Activated CD8-positive, alpha-beta T cell treated with anti-CD3 and anti-CD28 coated beads, Interleukin-2, amount 10 ng/mL, durations not matched to agents 7 days and 5 days (primary cell): ENCODE measurements at regions of chr2 and their contacts with region 1.

Region 1: GRCh38 chr2:101223814-101224231 is 28.9 kb upstream of the CNOT11 start:
- DNase-seq: peak; percentile 83
- ATAC-seq: peak; percentile 95
- H3K4me3 Mint-ChIP-seq: peak overlapping the region; percentile 34
- H3K27ac Mint-ChIP-seq: peak overlapping the region; percentile 86
- H3K4me1 Mint-ChIP-seq: peaks cover 28% of the 10 kb centered on the region
- H3K27me3 Mint-ChIP-seq: no peaks in the 10 kb centered on the region

Region 2: DNA sequence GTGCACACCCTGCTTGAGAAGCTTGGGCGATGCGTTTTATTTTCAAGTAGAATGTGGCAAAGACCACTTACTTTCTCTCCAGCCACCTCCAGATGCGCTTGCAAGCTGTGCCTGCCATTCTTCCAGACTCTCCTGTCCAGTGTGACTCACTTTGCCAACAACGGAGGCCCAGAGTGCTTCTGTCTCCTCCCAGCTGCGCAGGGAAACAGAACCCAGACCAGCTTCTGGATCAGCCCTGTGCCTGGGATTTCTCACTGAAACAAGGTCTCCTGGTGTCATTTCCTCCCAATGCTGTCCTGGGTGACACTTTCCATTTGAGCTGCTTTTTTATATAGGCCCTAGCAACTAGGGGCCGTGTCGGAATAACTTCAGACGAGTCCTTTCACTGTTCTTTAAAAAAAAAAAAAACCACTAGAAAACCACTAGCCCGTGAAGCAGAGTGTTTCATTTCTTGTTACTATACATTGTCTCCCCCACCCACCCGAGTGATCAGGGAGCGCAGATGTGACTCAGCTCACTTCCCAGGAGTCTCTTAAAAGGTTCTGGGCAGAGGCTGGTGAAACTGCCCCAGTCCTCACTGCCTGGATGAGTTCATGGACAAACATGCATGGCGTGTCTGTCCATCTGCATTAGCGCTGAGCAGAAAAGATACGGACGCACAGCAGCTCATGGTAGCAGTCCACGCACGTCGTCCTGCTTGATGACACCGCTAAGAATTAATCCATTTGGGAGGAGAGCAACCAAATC is 247.0 kb before region 1 on chr2:
- CTCF ChIA-PET with region 1: no interaction called
- POLR2A ChIA-PET with region 1: no interaction called
- DNase-seq: no peak
- ATAC-seq: no peak
- H3K4me3 Mint-ChIP-seq: no peak overlapping the region
- H3K27ac Mint-ChIP-seq: no peak overlapping the region
- H3K4me1 Mint-ChIP-seq: peaks cover 7% of the 10 kb centered on the region
- H3K27me3 Mint-ChIP-seq: no peaks in the 10 kb centered on the region

Region 3: DNA sequence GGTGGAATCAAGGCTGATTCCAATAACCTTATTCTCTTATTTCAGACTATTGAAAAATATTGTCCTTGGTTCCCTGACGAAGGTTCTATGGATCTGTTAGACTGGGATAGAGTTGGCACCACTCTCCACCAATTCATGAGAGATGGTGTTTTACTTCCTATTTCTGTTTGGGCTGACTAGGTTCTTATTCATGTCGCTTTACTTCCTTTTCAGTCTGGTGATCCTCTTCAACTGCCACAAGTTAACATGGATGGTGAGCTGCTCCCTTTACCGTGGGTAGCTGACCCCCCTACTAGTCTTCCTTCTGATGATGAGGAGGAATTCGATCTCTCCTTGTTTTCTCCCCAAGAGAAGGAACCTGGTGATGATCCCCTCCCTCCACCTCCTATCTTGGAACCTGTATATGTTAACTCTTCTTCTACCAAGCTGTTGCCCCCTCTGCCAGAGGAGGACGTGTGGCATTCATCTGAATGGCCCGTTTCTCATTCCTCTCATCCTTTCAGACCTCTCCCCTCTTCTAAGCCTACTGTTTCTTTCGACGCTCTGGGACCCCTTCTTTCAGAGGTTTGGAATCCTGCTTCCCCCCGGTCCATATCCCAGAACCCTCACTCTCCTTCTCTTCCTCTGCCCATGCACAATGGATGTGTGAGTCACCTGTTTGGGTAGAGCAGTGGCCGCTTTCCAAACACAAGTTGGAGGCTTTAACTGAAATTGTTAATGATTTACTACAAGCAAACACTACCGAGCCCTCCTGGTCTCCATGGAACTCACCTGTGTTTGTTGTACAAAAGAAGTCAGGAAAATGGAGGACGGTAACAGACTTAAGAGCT is 15.3 kb after region 1 on chr2:
- CTCF ChIA-PET with region 1: interaction called, 12 read pairs
- POLR2A ChIA-PET with region 1: no interaction called
- DNase-seq: no peak
- ATAC-seq: no peak
- H3K4me3 Mint-ChIP-seq: no peak overlapping the region
- H3K27ac Mint-ChIP-seq: no peak overlapping the region
- H3K4me1 Mint-ChIP-seq: peaks cover 4% of the 10 kb centered on the region
- H3K27me3 Mint-ChIP-seq: peaks cover 4% of the 10 kb centered on the region